ENCODE measurements at regions of chr9 and their contacts with region 1.

Region 1: GRCh38 chr9:131645078-131645776 is 94.6 kb downstream of the RAPGEF1 start:
- DNase-seq: peak; percentile 65
- H3K4me3 Mint-ChIP-seq: peak overlapping the region; percentile 43
- H3K27ac Mint-ChIP-seq: peak overlapping the region; percentile 94
- H3K4me1 Mint-ChIP-seq: peaks cover 68% of the 10 kb centered on the region
- H3K27me3 Mint-ChIP-seq: no peaks in the 10 kb centered on the region

Region 2: GRCh38 chr9:131590908-131591844 is 54.1 kb before region 1 on chr9:
- CTCF ChIA-PET with region 1: interaction called, 13 read pairs
- POLR2A ChIA-PET with region 1: interaction called, 3 read pairs
- intact Hi-C with region 1: loop called (anchors 5 kb)
- DNase-seq: peak; percentile 87
- H3K4me3 Mint-ChIP-seq: no peak overlapping the region
- H3K27ac Mint-ChIP-seq: peak overlapping the region; percentile 72
- H3K4me1 Mint-ChIP-seq: peaks cover 27% of the 10 kb centered on the region
- H3K27me3 Mint-ChIP-seq: no peaks in the 10 kb centered on the region

Region 3: DNA sequence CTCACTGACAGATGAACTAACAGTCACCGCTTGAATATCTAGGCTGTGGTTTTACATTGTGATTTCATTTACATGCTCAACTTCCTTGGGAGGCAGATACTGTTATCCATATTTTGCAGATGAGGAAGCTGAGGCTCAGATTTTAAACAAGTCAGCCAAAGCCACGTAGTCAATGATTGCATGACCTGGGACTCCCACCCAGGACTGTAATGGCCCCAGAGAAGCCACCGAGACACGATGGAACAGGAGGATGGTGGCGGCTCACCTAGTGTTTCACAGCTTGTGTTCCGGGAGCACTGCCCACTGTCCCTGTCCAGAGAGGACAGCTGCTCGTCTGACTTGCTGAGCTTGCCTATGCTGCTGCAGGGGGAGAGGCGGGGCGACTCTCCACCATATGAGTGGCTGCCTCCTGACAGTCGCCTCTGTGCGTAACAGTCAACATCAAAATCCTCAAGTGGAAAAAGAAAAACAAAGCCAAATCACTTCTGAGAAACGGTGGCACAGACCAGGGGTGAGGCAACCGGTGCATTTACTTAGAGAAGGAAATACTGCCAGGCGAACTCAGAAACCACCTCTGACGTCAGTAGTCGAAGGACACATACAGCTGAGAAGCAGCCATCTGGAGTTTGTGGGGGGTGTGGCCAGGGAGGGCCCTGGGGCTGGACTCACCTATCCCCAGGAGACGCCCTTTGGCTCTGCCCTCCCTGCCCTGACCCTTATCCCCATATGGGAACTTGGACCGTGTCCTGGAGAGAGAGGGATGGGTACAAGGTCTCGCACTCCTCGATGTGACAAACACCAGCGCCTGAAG is 17.4 kb before region 1 on chr9:
- CTCF ChIA-PET with region 1: interaction called, 4 read pairs
- POLR2A ChIA-PET with region 1: interaction called, 3 read pairs
- intact Hi-C with region 1: loop called (anchors 2 kb)
- DNase-seq: peak; percentile 70
- H3K4me3 Mint-ChIP-seq: no peak overlapping the region
- H3K27ac Mint-ChIP-seq: peak overlapping the region; percentile 80
- H3K4me1 Mint-ChIP-seq: peaks cover 49% of the 10 kb centered on the region
- H3K27me3 Mint-ChIP-seq: no peaks in the 10 kb centered on the region

Region 4: GRCh38 chr9:131656356-131657036 is 11.3 kb after region 1 on chr9:
- CTCF ChIA-PET with region 1: interaction called, 5 read pairs
- POLR2A ChIA-PET with region 1: interaction called, 14 read pairs
- intact Hi-C with region 1: loop called (anchors 1 kb)
- DNase-seq: peak; percentile 84
- H3K4me3 Mint-ChIP-seq: peak overlapping the region; percentile 58
- H3K27ac Mint-ChIP-seq: peak overlapping the region; percentile 91
- H3K4me1 Mint-ChIP-seq: peaks cover 86% of the 10 kb centered on the region
- H3K27me3 Mint-ChIP-seq: no peaks in the 10 kb centered on the region

Region 5: GRCh38 chr9:131709771-131710454 is 64.7 kb after region 1 on chr9:
- CTCF ChIA-PET with region 1: interaction called, 4 read pairs
- POLR2A ChIA-PET with region 1: interaction called, 6 read pairs
- intact Hi-C with region 1: loop called (anchors 2 kb)
- DNase-seq: peak; percentile 73
- H3K4me3 Mint-ChIP-seq: peak overlapping the region; percentile 62
- H3K27ac Mint-ChIP-seq: peak overlapping the region; percentile 96
- H3K4me1 Mint-ChIP-seq: peaks cover 86% of the 10 kb centered on the region
- H3K27me3 Mint-ChIP-seq: no peaks in the 10 kb centered on the region

Measured in activated CD4-positive, alpha-beta memory T cell treated with anti-CD3 and anti-CD28 coated beads for 36 hours (primary cell).